ENCODE measurements at regions of chr2 and their contacts with region 1.

Region 1: DNA sequence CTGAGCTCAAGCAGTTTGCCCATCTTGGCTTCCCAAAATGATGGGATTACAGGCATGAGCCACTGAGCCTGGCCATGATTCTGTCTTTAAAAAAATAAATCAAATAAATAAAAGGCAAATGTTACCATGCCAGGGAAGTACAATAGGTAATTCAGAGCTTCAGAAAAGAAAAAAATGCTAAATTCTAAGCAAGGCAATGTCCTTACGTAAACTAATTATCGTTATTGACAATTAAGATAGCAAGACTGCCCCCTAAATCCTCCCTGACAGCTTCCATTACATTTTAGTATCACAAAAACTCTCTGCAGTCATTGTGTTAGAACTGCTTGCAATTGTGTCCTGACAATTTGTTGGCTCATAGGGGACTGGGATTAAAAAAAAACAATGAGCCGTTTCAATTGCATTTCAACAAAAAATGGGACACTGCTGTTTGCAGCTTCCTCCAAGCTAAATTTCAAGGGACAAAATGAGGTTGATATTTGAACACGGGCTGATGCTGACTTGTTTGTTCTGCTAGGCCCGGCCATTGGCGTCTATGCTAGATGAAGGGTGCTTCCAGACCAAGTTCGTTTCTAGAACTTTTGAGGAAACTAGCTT is 88.9 kb downstream of the MOGAT1 start:
- DNase-seq: no peak
- H3K4me3 ChIP-seq: no peak overlapping the region
- H3K27ac ChIP-seq: no peak overlapping the region
- H3K4me1 ChIP-seq: peaks cover 24% of the 10 kb centered on the region
- H3K27me3 ChIP-seq: no peaks in the 10 kb centered on the region
- CTCF ChIP-seq: no peak

Region 2: DNA sequence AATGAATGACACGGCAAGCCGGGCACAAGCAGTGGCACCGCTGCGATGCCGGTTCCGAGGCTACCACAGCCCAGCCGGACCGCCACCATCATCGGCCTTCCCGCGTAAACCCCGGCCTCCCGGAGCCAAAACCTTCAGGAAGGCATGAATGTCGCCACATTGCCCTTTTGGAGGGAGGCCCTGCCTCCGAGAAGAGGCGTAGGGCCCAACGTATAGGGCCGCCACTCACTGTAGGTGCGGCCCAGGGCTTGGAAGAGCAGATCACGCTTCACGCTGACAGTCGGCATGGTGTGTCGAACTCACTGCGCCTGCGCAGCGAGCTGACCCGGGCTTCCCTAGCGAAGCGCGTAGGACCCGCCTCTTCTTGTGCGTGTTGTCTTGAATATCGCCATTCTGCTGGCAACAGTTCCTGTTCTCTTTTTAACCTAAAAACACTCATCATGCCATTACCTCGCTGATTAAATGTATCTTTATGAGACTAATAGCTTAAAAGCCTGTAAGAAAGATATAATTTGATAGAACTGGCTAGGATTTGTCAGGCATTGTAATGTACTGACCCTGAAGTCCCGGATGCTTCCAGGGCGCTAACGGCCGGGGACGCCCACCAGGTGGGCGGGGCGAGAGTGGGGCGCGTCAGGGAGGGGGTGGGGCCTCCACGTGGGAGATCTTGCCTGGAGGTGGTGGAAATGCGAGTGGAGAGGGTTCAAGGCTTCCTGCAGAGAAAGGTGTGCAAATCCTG is 104.4 kb before region 1 on chr2 and contains the start of gene FARSB:
- CTCF ChIA-PET with region 1: no interaction called
- POLR2A ChIA-PET with region 1: no interaction called
- intact Hi-C with region 1: no loop called
- DNase-seq: peak; percentile 97 to 98
- H3K4me3 ChIP-seq: peak within 1 kb of the TSS; percentile 78
- H3K27ac ChIP-seq: peak within 1 kb of the TSS; percentile 45
- H3K4me1 ChIP-seq: peaks cover 27% of the 10 kb centered on the region
- H3K27me3 ChIP-seq: no peaks in the 10 kb centered on the region
- CTCF ChIP-seq: no peak
- total RNA-seq, gene FARSB: 37.5 and 50.2 TPM in 2 replicates

Region 3: DNA sequence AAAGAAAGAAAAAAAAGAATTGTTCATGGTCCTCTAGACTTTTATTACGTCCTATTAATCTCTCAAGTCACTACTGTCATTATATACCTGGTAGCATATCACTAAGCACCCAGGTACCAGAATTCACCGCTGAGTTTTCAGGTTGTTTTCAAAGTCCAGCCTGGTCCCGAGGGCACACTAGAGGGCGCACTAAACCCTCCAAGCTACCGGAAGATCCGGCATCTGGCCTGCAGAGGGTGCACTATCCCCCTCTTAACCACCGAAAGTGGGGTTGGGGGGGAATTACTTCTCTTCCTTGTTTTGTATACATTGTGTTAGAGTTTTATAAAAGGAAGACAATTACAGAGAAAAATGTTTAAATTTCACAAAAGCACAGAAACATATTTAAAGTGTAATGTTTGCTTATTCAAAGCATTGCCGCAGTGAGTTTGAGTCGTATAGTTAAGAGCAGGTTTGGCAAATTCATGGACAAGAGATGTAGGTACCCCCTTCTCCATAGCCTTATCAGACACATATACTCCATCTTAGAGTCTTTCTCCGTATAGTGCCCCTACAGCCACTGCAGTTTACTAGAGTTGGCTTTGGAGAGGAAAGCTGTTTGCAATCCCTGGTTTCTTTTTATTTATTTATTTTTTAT is 69.7 kb before region 1 on chr2:
- CTCF ChIA-PET with region 1: no interaction called
- POLR2A ChIA-PET with region 1: no interaction called
- intact Hi-C with region 1: no loop called
- DNase-seq: peak; percentile 80 to 87
- H3K4me3 ChIP-seq: no peak overlapping the region
- H3K27ac ChIP-seq: no peak overlapping the region
- H3K4me1 ChIP-seq: no peaks in the 10 kb centered on the region
- H3K27me3 ChIP-seq: no peaks in the 10 kb centered on the region
- CTCF ChIP-seq: peak; percentile 100

Region 4: DNA sequence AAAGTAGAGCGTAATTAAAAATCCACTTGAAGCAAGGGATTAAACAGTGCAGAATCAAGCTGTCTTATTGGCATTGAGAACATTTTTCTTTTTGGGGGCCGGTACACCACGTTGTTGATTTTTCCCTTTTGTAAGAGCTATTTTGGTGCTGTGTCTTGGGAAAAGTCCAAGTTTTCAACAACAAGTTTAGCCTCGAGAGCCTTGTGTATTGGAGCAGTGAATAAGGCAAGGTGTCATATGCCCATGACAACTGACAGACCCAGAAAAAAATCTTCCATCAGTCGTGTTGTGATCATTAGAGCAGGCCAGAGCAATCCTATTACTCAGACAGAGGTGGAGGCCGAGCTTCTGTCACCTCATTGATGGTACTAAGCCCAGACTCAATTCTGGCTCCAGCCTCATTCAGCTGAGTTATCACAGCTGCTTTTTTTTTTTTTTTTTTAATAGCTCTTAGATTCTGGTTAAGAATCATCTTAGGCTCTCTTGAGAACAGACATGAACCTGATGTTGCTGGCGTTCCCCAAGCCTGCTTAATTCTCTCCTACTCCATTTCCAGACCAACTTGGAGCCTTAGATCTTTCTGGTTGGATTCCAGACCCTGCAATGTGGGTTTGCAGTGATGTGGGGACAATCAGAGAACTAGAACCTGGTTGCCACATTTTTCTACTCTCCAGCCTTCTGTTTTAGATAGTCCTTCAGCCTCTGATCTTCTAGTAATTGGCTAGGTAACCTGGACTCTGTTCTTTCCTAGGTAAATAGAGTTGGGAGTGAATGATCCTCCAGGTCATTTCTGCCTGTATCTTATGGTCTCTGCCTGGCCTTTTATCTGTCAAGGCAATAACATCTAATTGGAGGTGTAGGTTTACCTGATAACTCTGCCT is 45.8 kb before region 1 on chr2:
- CTCF ChIA-PET with region 1: interaction called, 3 read pairs
- POLR2A ChIA-PET with region 1: interaction called, 10 read pairs
- intact Hi-C with region 1: loop called (anchors 1 kb)
- DNase-seq: no peak
- H3K4me3 ChIP-seq: no peak overlapping the region
- H3K27ac ChIP-seq: no peak overlapping the region
- H3K4me1 ChIP-seq: no peaks in the 10 kb centered on the region
- H3K27me3 ChIP-seq: no peaks in the 10 kb centered on the region
- CTCF ChIP-seq: no peak

Region 5: GRCh38 chr2:222734703-222735014 is 25.7 kb before region 1 on chr2:
- CTCF ChIA-PET with region 1: interaction called, 4 read pairs
- POLR2A ChIA-PET with region 1: interaction called, 12 read pairs
- intact Hi-C with region 1: no loop called
- DNase-seq: no peak
- H3K4me3 ChIP-seq: no peak overlapping the region
- H3K27ac ChIP-seq: no peak overlapping the region
- H3K4me1 ChIP-seq: peaks cover 20% of the 10 kb centered on the region
- H3K27me3 ChIP-seq: no peaks in the 10 kb centered on the region
- CTCF ChIP-seq: no peak

Measured in PC-9 (cell line).